ENCODE measurements at regions of chr1 and their contacts with region 1.

Region 1: DNA sequence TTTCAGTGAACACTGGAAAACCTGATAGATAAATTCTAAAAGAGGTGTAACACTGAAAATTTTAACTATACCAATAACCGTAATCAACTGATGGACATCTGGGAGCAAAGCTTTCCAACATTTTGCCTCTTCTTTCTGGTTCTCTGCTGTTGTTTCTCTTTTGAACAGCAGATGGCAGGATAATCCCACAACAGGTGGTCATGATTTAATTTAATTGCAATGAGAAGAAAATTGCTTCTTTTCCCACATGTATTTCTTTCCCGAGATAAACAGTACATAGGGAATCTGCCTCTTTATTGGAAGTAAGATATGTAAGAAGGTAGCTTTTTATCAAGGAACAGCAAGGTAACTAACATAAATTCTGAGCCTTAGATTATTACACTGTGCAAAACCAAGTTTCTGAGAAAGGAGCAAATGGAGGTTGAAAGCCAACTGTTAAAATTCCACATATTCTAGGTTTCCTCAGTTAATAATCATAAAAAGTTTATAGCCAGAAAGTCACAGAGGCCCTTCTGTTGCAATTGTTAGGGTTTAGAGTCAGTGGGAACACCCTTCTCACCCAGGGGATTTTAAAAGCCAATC is 72.9 kb downstream of the RPS6KA1 start:
- DNase-seq: no peak
- ATAC-seq: peak; percentile 79 to 85 (median 84)
- H3K4me3 ChIP-seq: no peak overlapping the region
- H3K27ac ChIP-seq: no peak overlapping the region
- H3K4me1 ChIP-seq: peaks cover 0 to 22% (median 0%) of the 10 kb centered on the region in 4 donors
- H3K27me3 ChIP-seq: no peaks in the 10 kb centered on the region
- CTCF ChIP-seq: peak; percentile 86 to 96 (median 91)
- POLR2A ChIP-seq: no peak

Region 2: DNA sequence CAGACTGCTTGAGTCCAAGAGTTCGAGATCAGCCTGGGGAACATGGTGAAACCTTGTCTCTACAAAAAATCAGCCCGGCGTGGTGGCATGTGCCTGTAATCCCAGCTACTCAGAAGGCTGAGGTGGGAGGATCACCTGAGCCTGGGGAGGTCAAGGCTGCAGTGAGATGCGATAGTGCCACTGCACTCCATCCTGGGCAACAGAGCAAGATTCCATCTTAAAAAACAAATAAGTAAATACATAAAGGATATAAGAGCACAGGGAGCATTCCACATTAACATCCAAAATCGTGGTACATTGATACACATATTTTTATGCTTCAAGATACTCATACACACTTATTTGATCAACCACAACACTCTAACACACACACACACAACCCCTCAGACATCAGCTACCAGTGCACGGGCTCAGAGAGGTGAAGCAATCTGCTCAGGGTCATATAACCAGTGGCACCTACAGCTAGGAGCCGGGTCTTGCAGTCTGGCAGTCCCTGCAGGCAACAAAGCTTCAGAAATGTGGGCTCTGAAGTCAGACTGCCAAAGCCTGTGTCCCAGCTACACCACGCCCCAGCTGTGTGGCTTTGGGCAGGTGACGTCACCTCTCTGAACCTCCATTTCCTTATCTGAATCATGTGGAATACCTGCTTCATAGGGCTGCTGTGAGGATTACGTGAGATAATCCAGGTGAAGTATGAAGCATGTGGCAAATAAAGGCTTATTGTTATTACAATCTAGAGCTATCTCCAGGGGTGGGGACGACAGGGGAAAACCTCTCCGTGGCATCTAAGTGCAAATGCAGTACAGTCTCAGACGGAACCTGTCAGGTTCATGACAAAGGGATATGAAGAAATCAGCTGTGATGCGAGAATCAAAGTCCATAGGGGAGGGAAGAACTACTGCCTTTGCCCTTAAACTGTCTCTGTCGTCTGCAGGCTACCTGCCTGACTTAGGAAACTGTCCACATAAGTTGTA is 243.8 kb before region 1 on chr1:
- intact Hi-C with region 1: no loop called
- DNase-seq: peak in 1 of 3 donors; percentile 62
- ATAC-seq: peak; percentile 85 to 92 (median 88)
- H3K4me3 ChIP-seq: no peak overlapping the region
- H3K27ac ChIP-seq: peak overlapping the region in 2 of 3 donors; percentile 0 to 55
- H3K4me1 ChIP-seq: peaks cover 0 to 10% (median 5%) of the 10 kb centered on the region in 4 donors
- H3K27me3 ChIP-seq: no peaks in the 10 kb centered on the region
- CTCF ChIP-seq: no peak
- POLR2A ChIP-seq: peak; percentile 57

Region 3: GRCh38 chr1:26677306-26678115 is 75.0 kb after region 1 on chr1:
- intact Hi-C with region 1: loop called in 1 of 2 experiments (anchors 10 kb)
- DNase-seq: peak; percentile 75 to 84 (median 84)
- ATAC-seq: peak; percentile 99 to 100 (median 100)
- H3K4me3 ChIP-seq: peak overlapping the region in 1 of 3 donors; percentile 4
- H3K27ac ChIP-seq: peak overlapping the region in 2 of 3 donors; percentile 6 to 23
- H3K4me1 ChIP-seq: peaks cover 0 to 8% (median 2%) of the 10 kb centered on the region in 4 donors
- H3K27me3 ChIP-seq: no peaks in the 10 kb centered on the region
- CTCF ChIP-seq: peak; percentile 67 to 83 (median 74)
- POLR2A ChIP-seq: no peak

Region 4: DNA sequence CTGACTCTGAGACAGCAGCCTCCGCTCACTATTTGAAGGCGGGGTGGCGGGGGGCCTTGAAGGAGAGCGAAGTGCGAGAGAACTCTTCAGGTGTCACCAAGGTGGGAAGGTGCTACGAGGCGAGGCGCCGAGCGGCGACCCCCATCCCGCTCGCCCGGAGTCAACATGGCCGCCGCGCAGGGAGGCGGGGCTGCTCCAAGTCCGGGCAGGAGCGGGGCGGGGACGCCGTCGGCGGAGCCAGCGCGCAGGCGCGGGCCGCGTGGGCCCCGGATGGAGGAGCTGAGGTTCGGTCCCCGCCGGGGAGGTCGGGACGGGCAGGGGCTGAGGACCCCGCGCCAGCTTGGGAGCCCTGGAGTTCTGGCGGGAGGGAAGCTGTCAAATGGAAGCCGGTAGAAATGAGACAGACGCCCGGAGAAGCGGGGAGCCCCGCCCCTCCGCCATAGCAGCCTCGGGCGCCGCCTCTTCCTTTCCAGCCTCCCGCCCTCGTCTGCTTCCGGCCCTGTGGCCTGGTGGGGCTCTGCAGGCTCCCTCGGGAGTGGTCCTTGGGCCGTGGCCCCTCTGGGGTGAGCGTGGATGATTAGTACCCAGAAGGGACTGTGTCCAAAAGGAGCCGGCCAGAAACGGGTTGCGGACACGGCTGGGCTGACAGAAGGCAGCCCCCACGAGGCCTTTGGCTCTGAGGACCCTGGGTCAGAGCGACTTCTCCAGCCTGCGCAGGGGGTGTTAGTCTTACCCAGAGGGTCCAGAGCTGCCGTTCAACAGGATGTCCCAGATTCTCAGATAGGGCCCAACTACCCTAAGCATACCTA is 185.4 kb after region 1 on chr1 and contains the start of gene PIGV:
- intact Hi-C with region 1: loop called (anchors 5 to 10 kb)
- DNase-seq: peak; percentile 90 to 91 (median 90)
- ATAC-seq: peak; percentile 67 to 77 (median 71)
- H3K4me3 ChIP-seq: peak within 1 kb of the TSS; percentile 65 to 84 (median 76)
- H3K27ac ChIP-seq: peak within 1 kb of the TSS; percentile 97 to 100 (median 100)
- H3K4me1 ChIP-seq: peaks cover 0 to 46% (median 24%) of the 10 kb centered on the region in 4 donors
- H3K27me3 ChIP-seq: no peaks in the 10 kb centered on the region
- CTCF ChIP-seq: peak in 2 of 4 donors; percentile 8 to 26
- POLR2A ChIP-seq: peak; percentile 80
- total RNA-seq, gene PIGV: 13.2 to 27.8 (median 19.2) TPM

Region 5: DNA sequence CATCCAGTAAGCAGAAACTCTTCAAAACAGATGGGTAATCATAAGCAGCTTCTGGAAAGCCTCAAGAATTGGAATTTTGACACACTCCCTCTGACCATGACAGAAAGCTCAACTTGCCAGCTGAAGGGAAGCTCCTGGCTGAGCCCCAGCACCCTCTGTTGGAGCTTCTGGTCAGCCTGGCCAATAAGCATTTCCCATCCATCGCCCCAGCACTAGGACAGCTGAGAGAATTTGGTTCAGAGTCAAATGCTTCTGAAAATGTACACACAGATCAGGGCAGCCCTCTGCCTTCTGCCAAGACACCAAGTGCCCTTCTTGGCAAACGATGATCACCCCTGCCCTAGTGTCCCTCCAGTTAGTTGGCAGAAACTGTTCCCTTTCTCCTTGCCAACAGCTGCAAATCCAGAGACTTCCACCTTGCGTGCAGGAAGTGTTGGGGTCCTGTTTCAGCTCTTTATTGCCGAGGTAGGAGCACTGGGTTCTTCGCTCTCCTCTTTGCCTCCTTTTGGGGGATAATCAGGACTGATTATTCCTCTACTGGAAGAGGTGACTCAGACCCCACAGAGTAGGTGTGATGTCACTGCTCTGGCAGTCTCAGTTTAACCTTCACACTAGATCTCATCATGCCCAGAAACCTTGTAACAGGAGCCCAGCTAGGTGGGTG is 197.1 kb after region 1 on chr1:
- intact Hi-C with region 1: loop called (anchors 5 to 10 kb)
- DNase-seq: peak; percentile 80 to 94 (median 91)
- ATAC-seq: peak; percentile 85 to 94 (median 90)
- H3K4me3 ChIP-seq: no peak overlapping the region
- H3K27ac ChIP-seq: peak overlapping the region; percentile 65 to 72 (median 68)
- H3K4me1 ChIP-seq: peaks cover 0 to 43% (median 18%) of the 10 kb centered on the region in 4 donors
- H3K27me3 ChIP-seq: no peaks in the 10 kb centered on the region
- CTCF ChIP-seq: no peak
- POLR2A ChIP-seq: no peak

Region 6: DNA sequence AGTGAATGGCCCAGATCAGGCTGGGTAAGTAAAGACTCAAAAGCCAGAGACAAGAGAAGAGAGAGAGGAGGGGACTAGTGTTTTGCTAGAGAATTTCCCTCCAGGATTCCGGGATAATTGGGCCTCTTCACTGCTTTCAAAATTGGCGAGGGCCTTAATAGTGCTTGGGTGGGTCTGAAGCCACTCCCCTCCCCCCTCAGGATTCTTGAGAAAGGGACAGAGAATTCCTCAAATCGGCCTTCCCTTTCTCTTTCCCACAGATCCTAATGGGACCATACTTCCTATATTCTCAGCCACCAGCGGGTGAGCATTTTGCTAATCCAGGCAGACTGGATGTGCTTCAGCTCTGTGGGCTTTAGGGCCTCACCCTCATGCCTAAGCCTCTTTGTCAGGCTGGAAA is 272.4 kb after region 1 on chr1:
- intact Hi-C with region 1: loop called in 1 of 2 experiments (anchors 10 kb)
- DNase-seq: no peak
- ATAC-seq: no peak
- H3K4me3 ChIP-seq: no peak overlapping the region
- H3K27ac ChIP-seq: no peak overlapping the region
- H3K4me1 ChIP-seq: peaks cover 0 to 7% (median 0%) of the 10 kb centered on the region in 4 donors
- H3K27me3 ChIP-seq: no peaks in the 10 kb centered on the region
- CTCF ChIP-seq: no peak
- POLR2A ChIP-seq: no peak

Measured in right lobe of liver (tissue), 6 donors.